Pancreas (tissue), 10 donors: ENCODE measurements at regions of chr9 and their contacts with region 1.

Region 1: DNA sequence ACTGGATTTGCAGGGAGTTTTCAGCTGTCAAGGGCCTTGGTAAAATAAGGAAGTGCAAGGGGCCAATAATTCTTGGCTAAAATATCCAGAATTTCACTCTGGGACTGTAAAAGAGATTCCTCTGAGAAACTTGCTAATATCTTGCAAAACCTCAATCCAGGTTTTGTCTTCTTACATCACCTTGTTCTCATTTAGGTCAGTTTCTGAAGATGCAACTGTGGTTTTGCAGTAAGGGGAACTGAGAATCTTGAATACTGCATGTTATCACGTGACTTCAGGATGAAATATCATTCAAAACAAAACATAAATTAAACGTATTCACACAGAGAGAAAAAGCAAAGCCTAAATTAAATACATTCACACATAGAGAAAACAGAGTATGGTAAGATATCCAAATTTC is 35.0 kb upstream of the RIC1 start:
- DNase-seq: no peak
- ATAC-seq: no peak
- H3K4me3 ChIP-seq: no peak overlapping the region
- H3K27ac ChIP-seq: no peak overlapping the region
- H3K4me1 ChIP-seq: no peaks in the 10 kb centered on the region
- H3K27me3 ChIP-seq: no peaks in the 10 kb centered on the region
- CTCF ChIP-seq: no peak

Region 2: DNA sequence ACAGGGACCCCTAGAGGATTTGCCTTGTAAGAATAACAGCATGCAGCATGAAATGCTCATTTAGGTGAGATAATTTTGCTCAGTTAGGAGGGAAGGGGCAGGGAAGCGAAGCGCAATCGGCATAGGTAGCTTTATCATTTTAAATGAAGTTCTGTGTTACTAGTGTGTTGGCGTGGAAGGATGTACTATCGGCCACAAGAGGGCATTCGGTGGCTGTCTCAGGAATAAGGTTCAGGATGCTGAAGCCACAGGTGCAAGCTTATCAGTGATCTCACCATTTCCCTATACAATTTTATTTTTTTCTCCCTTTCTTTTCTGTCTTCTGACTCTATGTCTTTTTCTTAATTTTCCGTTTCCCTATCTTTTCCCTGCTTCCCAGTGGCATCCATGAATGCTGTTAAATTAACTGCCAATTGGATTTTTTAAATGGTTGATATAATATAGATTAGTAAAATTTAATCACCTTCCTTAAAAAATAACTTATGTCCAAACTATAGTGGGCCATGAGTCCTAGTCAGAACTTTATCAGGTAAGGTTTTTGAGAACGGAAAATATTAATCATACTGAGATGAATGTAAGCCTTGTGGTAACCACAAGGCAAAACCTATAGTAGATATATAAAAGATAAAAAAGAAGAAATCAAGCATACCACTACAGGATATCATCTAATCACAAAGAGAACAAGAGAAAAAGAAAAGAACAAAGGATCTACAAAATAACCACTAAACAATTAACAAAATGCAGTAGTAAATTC is 407.3 kb before region 1 on chr9:
- intact Hi-C with region 1: loop called in 1 of 3 experiments (anchors 5 kb)
- DNase-seq: peak in 3 of 6 donors; percentile 22 to 63 (median 35)
- ATAC-seq: peak; percentile 70 to 97 (median 94)
- H3K4me3 ChIP-seq: no peak overlapping the region
- H3K27ac ChIP-seq: no peak overlapping the region
- H3K4me1 ChIP-seq: no peaks in the 10 kb centered on the region
- H3K27me3 ChIP-seq: no peaks in the 10 kb centered on the region
- CTCF ChIP-seq: peak; percentile 45 to 65 (median 60)

Region 3: DNA sequence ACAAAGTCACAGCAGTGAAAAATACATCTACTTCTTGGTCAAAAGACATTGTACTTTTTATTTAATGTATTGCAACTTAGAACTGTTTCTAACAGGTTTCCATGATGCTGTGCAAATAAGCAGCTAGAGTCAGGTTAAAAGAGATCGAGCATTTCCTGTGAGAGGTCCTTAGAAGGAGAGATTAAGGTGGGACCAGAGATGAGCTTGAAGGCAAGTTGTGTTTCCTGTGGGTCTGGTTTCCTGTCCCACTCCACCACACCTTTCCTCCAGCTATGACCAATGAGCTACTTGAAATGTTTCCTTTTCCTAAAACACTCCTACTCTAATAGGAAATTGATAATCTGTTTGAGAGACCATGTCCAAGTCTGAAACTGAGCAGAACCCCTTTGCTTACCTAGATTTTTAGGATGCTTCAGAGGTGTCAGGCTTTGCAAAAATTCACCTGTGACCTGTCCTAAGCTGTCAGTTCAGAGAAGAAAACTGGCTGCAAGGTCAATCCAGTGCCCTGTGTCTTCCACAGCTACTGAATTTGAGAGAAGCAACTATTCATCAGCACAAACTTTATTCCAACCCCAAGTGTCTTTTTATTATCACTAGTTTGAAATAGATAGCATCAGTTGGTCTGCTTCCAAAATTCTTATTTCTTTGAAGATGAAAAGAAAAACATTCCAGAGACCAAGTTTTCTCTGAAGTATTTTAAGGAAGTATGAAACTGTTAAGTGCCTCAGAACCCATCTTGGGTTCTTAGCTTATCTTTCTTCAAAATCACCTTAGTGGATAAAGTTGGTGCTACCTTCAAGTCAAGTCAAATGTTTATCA is 241.1 kb before region 1 on chr9:
- intact Hi-C with region 1: no loop called
- DNase-seq: no peak
- ATAC-seq: no peak
- H3K4me3 ChIP-seq: no peak overlapping the region
- H3K27ac ChIP-seq: no peak overlapping the region
- H3K4me1 ChIP-seq: no peaks in the 10 kb centered on the region
- H3K27me3 ChIP-seq: no peaks in the 10 kb centered on the region
- CTCF ChIP-seq: no peak

Region 4: GRCh38 chr9:5529683-5530221 is 64.2 kb before region 1 on chr9:
- intact Hi-C with region 1: no loop called
- DNase-seq: no peak
- ATAC-seq: no peak
- H3K4me3 ChIP-seq: no peak overlapping the region
- H3K27ac ChIP-seq: no peak overlapping the region
- H3K4me1 ChIP-seq: no peaks in the 10 kb centered on the region
- H3K27me3 ChIP-seq: no peaks in the 10 kb centered on the region
- CTCF ChIP-seq: no peak